ENCODE measurements at regions of chr14 and their contacts with region 1.

Region 1: GRCh38 chr14:65336191-65336591 is 76.3 kb upstream of the FUT8 start:
- DNase-seq: peak in 2 of 9 donors; percentile 10 to 60
- ATAC-seq: peak; percentile 37
- H3K4me3 ChIP-seq: no peak overlapping the region
- H3K4me3 Mint-ChIP-seq: peak overlapping the region in 6 of 10 donors; percentile 2 to 83 (median 4)
- H3K27ac ChIP-seq: no peak overlapping the region
- H3K27ac Mint-ChIP-seq: peak overlapping the region; percentile 16 to 91 (median 64)
- H3K4me1 ChIP-seq: peaks cover 0 to 16% of the 10 kb centered on the region in 2 donors
- H3K4me1 Mint-ChIP-seq: peaks cover 21 to 60% (median 42%) of the 10 kb centered on the region in 7 donors
- H3K27me3 ChIP-seq: no peaks in the 10 kb centered on the region
- H3K27me3 Mint-ChIP-seq: no peaks in the 10 kb centered on the region

Region 2: GRCh38 chr14:65302571-65303189 is 33.5 kb before region 1 on chr14:
- CTCF ChIA-PET with region 1: no interaction called
- POLR2A ChIA-PET with region 1: no interaction called
- intact Hi-C with region 1: loop called in 1 of 2 experiments (anchors 1 kb)
- DNase-seq: peak in 1 of 9 donors; percentile 56
- ATAC-seq: peak; percentile 38
- H3K4me3 ChIP-seq: no peak overlapping the region
- H3K4me3 Mint-ChIP-seq: peak overlapping the region in 3 of 10 donors; percentile 4 to 51 (median 48)
- H3K27ac ChIP-seq: no peak overlapping the region
- H3K27ac Mint-ChIP-seq: peak overlapping the region in 7 of 9 donors; percentile 15 to 93 (median 47)
- H3K4me1 ChIP-seq: peaks cover 16 to 25% of the 10 kb centered on the region in 2 donors
- H3K4me1 Mint-ChIP-seq: peaks cover 37 to 76% (median 71%) of the 10 kb centered on the region in 7 donors
- H3K27me3 ChIP-seq: no peaks in the 10 kb centered on the region
- H3K27me3 Mint-ChIP-seq: no peaks in the 10 kb centered on the region

Region 3: GRCh38 chr14:65356327-65356852 is 20.2 kb after region 1 on chr14:
- CTCF ChIA-PET with region 1: interaction called, 3 read pairs
- POLR2A ChIA-PET with region 1: no interaction called
- intact Hi-C with region 1: loop called in 1 of 2 experiments (anchors 2 kb)
- DNase-seq: peak in 3 of 9 donors; percentile 4 to 48 (median 16)
- ATAC-seq: peak; percentile 38
- H3K4me3 ChIP-seq: no peak overlapping the region
- H3K4me3 Mint-ChIP-seq: peak overlapping the region in 2 of 10 donors; percentile 21 to 52
- H3K27ac ChIP-seq: no peak overlapping the region
- H3K27ac Mint-ChIP-seq: peak overlapping the region in 6 of 9 donors; percentile 31 to 82 (median 62)
- H3K4me1 ChIP-seq: peaks cover 5 to 13% of the 10 kb centered on the region in 2 donors
- H3K4me1 Mint-ChIP-seq: peaks cover 6 to 73% (median 16%) of the 10 kb centered on the region in 7 donors
- H3K27me3 ChIP-seq: no peaks in the 10 kb centered on the region
- H3K27me3 Mint-ChIP-seq: no peaks in the 10 kb centered on the region

Region 4: GRCh38 chr14:65453807-65454480 is 117.8 kb after region 1 on chr14:
- CTCF ChIA-PET with region 1: no interaction called
- POLR2A ChIA-PET with region 1: no interaction called
- intact Hi-C with region 1: no loop called
- DNase-seq: no peak
- ATAC-seq: no peak
- H3K4me3 ChIP-seq: no peak overlapping the region
- H3K4me3 Mint-ChIP-seq: no peak overlapping the region
- H3K27ac ChIP-seq: no peak overlapping the region
- H3K27ac Mint-ChIP-seq: peak overlapping the region in 1 of 9 donors; percentile 36
- H3K4me1 ChIP-seq: no peaks in the 10 kb centered on the region
- H3K4me1 Mint-ChIP-seq: peaks cover 15 to 56% (median 40%) of the 10 kb centered on the region in 7 donors
- H3K27me3 ChIP-seq: no peaks in the 10 kb centered on the region
- H3K27me3 Mint-ChIP-seq: no peaks in the 10 kb centered on the region

Region 5: DNA sequence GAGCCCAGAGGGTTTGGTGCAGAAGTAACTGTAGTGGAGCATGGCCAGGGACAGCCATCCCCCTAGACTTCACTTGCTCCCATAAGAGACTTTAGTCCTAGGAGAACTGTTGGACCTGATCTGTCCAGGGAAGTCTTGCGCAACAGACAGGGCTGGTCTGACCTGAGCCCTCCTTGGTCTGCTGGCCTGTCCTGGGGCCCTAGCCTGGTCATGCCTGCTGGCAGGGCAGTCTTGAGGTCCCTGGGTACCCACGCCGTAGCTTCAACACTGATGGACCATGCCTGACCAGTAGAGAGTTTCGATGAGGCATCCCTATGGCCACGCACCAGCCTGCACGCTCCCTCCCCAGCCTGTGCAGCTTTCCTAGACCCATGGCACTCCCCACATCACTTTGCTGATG is 1477.4 kb after region 1 on chr14:
- CTCF ChIA-PET with region 1: no interaction called
- POLR2A ChIA-PET with region 1: no interaction called
- intact Hi-C with region 1: no loop called
- DNase-seq: no peak
- ATAC-seq: no peak
- H3K4me3 ChIP-seq: no peak overlapping the region
- H3K4me3 Mint-ChIP-seq: no peak overlapping the region
- H3K27ac ChIP-seq: no peak overlapping the region
- H3K27ac Mint-ChIP-seq: no peak overlapping the region
- H3K4me1 ChIP-seq: no peaks in the 10 kb centered on the region
- H3K4me1 Mint-ChIP-seq: no peaks in the 10 kb centered on the region
- H3K27me3 ChIP-seq: no peaks in the 10 kb centered on the region
- H3K27me3 Mint-ChIP-seq: no peaks in the 10 kb centered on the region